ENCODE measurements at regions of chr5 and their contacts with region 1.

Region 1: GRCh38 chr5:30287890-30288289 is 905.6 kb upstream of the CDH6 start:
- DNase-seq: no peak
- ATAC-seq: no peak
- H3K4me3 ChIP-seq: no peak overlapping the region
- H3K27ac ChIP-seq: no peak overlapping the region
- H3K4me1 ChIP-seq: no peaks in the 10 kb centered on the region
- H3K27me3 ChIP-seq: no peaks in the 10 kb centered on the region
- CTCF ChIP-seq: no peak

Region 2: DNA sequence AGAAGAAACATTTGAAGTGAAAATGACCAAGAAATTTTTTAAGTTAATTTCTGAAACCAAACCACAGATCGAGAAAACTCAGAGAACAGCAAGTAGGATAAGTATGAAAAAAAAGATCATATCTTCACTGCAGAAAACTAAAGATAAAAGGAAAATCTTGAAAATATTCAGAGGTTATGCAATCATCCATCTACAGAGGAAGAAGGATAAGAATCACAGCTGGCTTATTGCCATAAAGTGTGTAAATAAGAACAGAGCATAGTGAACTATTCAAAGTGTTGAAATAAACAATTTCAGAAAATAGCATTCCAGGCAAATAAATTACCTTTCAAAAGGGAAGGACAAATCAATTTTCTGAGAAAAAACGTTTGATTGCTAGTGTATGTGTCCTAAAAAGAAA is 286.1 kb before region 1 on chr5:
- intact Hi-C with region 1: no loop called
- DNase-seq: no peak
- ATAC-seq: no peak
- H3K4me3 ChIP-seq: no peak overlapping the region
- H3K27ac ChIP-seq: no peak overlapping the region
- H3K4me1 ChIP-seq: no peaks in the 10 kb centered on the region
- H3K27me3 ChIP-seq: no peaks in the 10 kb centered on the region
- CTCF ChIP-seq: no peak

Region 3: GRCh38 chr5:30572279-30572678 is 284.4 kb after region 1 on chr5:
- intact Hi-C with region 1: loop called in 1 of 2 experiments (anchors 5 kb)
- DNase-seq: no peak
- ATAC-seq: no peak
- H3K4me3 ChIP-seq: no peak overlapping the region
- H3K27ac ChIP-seq: no peak overlapping the region
- H3K4me1 ChIP-seq: no peaks in the 10 kb centered on the region
- H3K27me3 ChIP-seq: no peaks in the 10 kb centered on the region
- CTCF ChIP-seq: no peak

Measured in psoas muscle (tissue), 8 donors.